ENCODE measurements at regions of chr6 and their contacts with region 1.

Region 1: GRCh38 chr6:28725890-28726348 is 197.9 kb downstream of the TRIM27 start:
- DNase-seq: peak; percentile 51 to 93 (median 70)
- ATAC-seq: peak; percentile 50
- H3K4me3 ChIP-seq: peak overlapping the region; percentile 63
- H3K27ac ChIP-seq: peak overlapping the region; percentile 80; the same call in 2 of the 3 replicates
- H3K4me1 ChIP-seq: peaks cover 7 to 10% of the 10 kb centered on the region in 2 experiments; a peak in 4 of 5 replicates
- H3K27me3 ChIP-seq: no peaks in the 10 kb centered on the region
- CTCF ChIP-seq: no peak
- EP300 ChIP-seq: peak; percentile 65
- POLR2A ChIP-seq: no peak
- RAD21 ChIP-seq: 0 out of 4 replicates have a peak, but pooled peaks of 1 of the 2 experiments have one; percentile 9

Region 2: GRCh38 chr6:28474441-28475219 is 251.3 kb before region 1 on chr6:
- CTCF ChIA-PET with region 1: no interaction called
- POLR2A ChIA-PET with region 1: no interaction called
- in situ Hi-C with region 1: no loop called
- intact Hi-C with region 1: no loop called
- DNase-seq: peak; percentile 64 to 93 (median 76)
- ATAC-seq: peak; percentile 96
- H3K4me3 ChIP-seq: peak overlapping the region; percentile 55
- H3K27ac ChIP-seq: peak overlapping the region; percentile 2; the same call in 1 of the 3 replicates
- H3K4me1 ChIP-seq: no peaks in the 10 kb centered on the region; a peak in 2 of 5 replicates
- H3K27me3 ChIP-seq: no peaks in the 10 kb centered on the region
- CTCF ChIP-seq: peak in 1 of 3 experiments; percentile 13; a peak in 1 of 6 replicates
- EP300 ChIP-seq: peak; percentile 87
- POLR2A ChIP-seq: peak; percentile 59
- RAD21 ChIP-seq: no peak; a peak in 2 of 4 replicates

Region 3: GRCh38 chr6:28737750-28738395 is 12.0 kb after region 1 on chr6:
- CTCF ChIA-PET with region 1: no interaction called
- POLR2A ChIA-PET with region 1: interaction called, 11 read pairs
- in situ Hi-C with region 1: no loop called
- intact Hi-C with region 1: loop called (anchors 1 kb)
- DNase-seq: peak in 3 of 4 experiments; percentile 4 to 61 (median 19)
- ATAC-seq: peak; percentile 9
- H3K4me3 ChIP-seq: peak overlapping the region; percentile 1
- H3K27ac ChIP-seq: peak overlapping the region; percentile 63
- H3K4me1 ChIP-seq: peaks cover 8 to 10% of the 10 kb centered on the region in 2 experiments; a peak in 4 of 5 replicates
- H3K27me3 ChIP-seq: no peaks in the 10 kb centered on the region
- CTCF ChIP-seq: no peak
- EP300 ChIP-seq: no peak
- POLR2A ChIP-seq: no peak
- RAD21 ChIP-seq: no peak

Region 4: GRCh38 chr6:28747631-28748157 is 21.8 kb after region 1 on chr6:
- CTCF ChIA-PET with region 1: no interaction called
- POLR2A ChIA-PET with region 1: interaction called, 14 read pairs
- in situ Hi-C with region 1: no loop called
- intact Hi-C with region 1: loop called (anchors 2 kb)
- DNase-seq: peak; percentile 77 to 99 (median 83)
- ATAC-seq: peak; percentile 84
- H3K4me3 ChIP-seq: peak overlapping the region; percentile 46
- H3K27ac ChIP-seq: peak overlapping the region; percentile 64
- H3K4me1 ChIP-seq: peaks cover 8 to 20% of the 10 kb centered on the region in 2 experiments; a peak in 4 of 5 replicates
- H3K27me3 ChIP-seq: no peaks in the 10 kb centered on the region
- CTCF ChIP-seq: no peak
- EP300 ChIP-seq: peak; percentile 88
- POLR2A ChIP-seq: no peak
- RAD21 ChIP-seq: peak in 1 of 2 experiments; percentile 45; a peak in 3 of 4 replicates

Region 5: DNA sequence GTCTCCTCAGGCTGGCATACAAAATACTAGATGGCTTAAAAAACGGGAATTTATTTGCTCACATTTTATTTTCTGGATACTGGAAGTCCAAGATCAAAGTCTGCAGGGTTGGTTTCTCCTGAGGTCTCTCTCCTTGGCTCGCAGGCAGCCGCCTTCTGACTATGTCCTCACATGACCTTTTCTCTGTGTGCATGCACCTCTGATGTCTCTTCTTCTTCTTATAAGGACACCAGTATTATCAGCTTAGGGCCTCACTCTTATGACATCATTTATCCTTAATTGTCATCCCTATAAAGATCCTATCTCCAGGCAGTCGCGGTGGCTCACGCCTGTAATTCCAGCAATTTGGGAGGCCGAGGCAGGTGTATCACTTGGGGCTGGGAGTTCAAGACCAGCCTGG is 207.2 kb after region 1 on chr6:
- CTCF ChIA-PET with region 1: no interaction called
- POLR2A ChIA-PET with region 1: no interaction called
- in situ Hi-C with region 1: no loop called
- intact Hi-C with region 1: no loop called
- DNase-seq: no peak
- ATAC-seq: no peak
- H3K4me3 ChIP-seq: no peak overlapping the region
- H3K27ac ChIP-seq: no peak overlapping the region
- H3K4me1 ChIP-seq: peaks cover 1 to 7% of the 10 kb centered on the region in 2 experiments; a peak in 3 of 5 replicates
- H3K27me3 ChIP-seq: no peaks in the 10 kb centered on the region
- CTCF ChIP-seq: no peak
- EP300 ChIP-seq: no peak
- POLR2A ChIP-seq: no peak
- RAD21 ChIP-seq: no peak